HEK293 (cell line): ENCODE measurements at regions of chr7 and their contacts with region 1.

Region 1: GRCh38 chr7:39894904-39895303 is 55.2 kb upstream of the CDK13 start:
- H3K4me3 ChIP-seq: no peak overlapping the region
- H3K27ac ChIP-seq: no peak overlapping the region
- H3K4me1 ChIP-seq: peaks cover 3% of the 10 kb centered on the region; the same call in 1 of the 2 replicates
- CTCF ChIP-seq: no peak

Region 2: GRCh38 chr7:39414224-39415035 is 480.5 kb before region 1 on chr7:
- CTCF ChIA-PET with region 1: no interaction called
- POLR2A ChIA-PET with region 1: no interaction called
- H3K4me3 ChIP-seq: peak overlapping the region; percentile 56
- H3K27ac ChIP-seq: peak overlapping the region; percentile 74
- H3K4me1 ChIP-seq: no peaks in the 10 kb centered on the region; the same call in 1 of the 2 replicates
- CTCF ChIP-seq: peak; percentile 72

Region 3: GRCh38 chr7:39948956-39949928 is 54.3 kb after region 1 on chr7:
- CTCF ChIA-PET with region 1: interaction called, 15 read pairs
- POLR2A ChIA-PET with region 1: interaction called, 9 read pairs
- H3K4me3 ChIP-seq: peak overlapping the region; percentile 99
- H3K27ac ChIP-seq: peak overlapping the region; percentile 99
- H3K4me1 ChIP-seq: no peaks in the 10 kb centered on the region
- CTCF ChIP-seq: peak; percentile 30; the same call in 1 of the 2 replicates

Region 4: DNA sequence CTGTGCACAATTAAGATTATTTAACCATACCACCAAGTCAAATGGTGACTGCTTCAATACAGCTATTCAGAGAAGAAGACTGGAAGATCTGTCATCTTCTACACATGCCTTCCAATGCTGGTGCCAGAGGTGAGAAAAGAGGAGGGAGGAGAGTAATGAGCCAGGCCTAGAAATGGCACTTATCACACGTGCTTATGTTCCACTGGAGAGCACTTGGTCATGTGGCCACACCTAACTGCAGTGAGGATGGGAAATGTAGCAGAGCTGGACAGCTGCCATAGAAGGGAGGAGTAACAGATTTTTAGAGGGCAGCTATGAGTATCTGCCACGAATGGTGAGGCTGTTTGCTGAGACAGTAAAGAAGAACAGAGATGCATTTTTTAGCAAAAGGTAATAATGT is 162.4 kb after region 1 on chr7:
- CTCF ChIA-PET with region 1: interaction called, 31 read pairs
- POLR2A ChIA-PET with region 1: no interaction called
- H3K4me3 ChIP-seq: no peak overlapping the region
- H3K27ac ChIP-seq: no peak overlapping the region
- H3K4me1 ChIP-seq: peaks cover 3% of the 10 kb centered on the region; the same call in 1 of the 2 replicates
- CTCF ChIP-seq: no peak

Region 5: GRCh38 chr7:40283391-40283790 is 388.5 kb after region 1 on chr7:
- CTCF ChIA-PET with region 1: no interaction called
- POLR2A ChIA-PET with region 1: no interaction called
- H3K4me3 ChIP-seq: no peak overlapping the region
- H3K27ac ChIP-seq: no peak overlapping the region
- H3K4me1 ChIP-seq: no peaks in the 10 kb centered on the region
- CTCF ChIP-seq: no peak